ENCODE measurements at regions of chr15 and their contacts with region 1.

Region 1: GRCh38 chr15:66196602-66197001 is 56.9 kb downstream of the MEGF11 start:
- DNase-seq: no peak

Region 2: GRCh38 chr15:67812241-67812644 is 1615.6 kb after region 1 on chr15:
- intact Hi-C with region 1: loop called in 1 of 2 experiments (anchors 5 kb)
- DNase-seq: peak; percentile 64

Region 3: GRCh38 chr15:68137096-68137495 is 1940.5 kb after region 1 on chr15:
- intact Hi-C with region 1: no loop called
- DNase-seq: no peak